Caco-2 (cell line): ENCODE measurements at regions of chr17 and their contacts with region 1.

Region 1: GRCh38 chr17:58317421-58318064 is 11.1 kb downstream of the TSPOAP1 start:
- DNase-seq: peak; percentile 77 to 83
- H3K4me3 ChIP-seq: no peak overlapping the region
- H3K4me3 Mint-ChIP-seq: no peak overlapping the region
- H3K27ac Mint-ChIP-seq: peak overlapping the region; percentile 8
- H3K4me1 ChIP-seq: peaks cover 16% of the 10 kb centered on the region
- H3K4me1 Mint-ChIP-seq: peaks cover 20% of the 10 kb centered on the region
- H3K27me3 ChIP-seq: no peaks in the 10 kb centered on the region
- H3K27me3 Mint-ChIP-seq: no peaks in the 10 kb centered on the region
- CTCF ChIP-seq: peak; percentile 86 to 91

Region 2: GRCh38 chr17:58303971-58304725 is 13.4 kb before region 1 on chr17:
- CTCF ChIA-PET with region 1: interaction called, 16 read pairs
- POLR2A ChIA-PET with region 1: no interaction called
- intact Hi-C with region 1: no loop called
- DNase-seq: peak; percentile 69 to 76
- H3K4me3 ChIP-seq: no peak overlapping the region
- H3K4me3 Mint-ChIP-seq: no peak overlapping the region
- H3K27ac Mint-ChIP-seq: no peak overlapping the region
- H3K4me1 ChIP-seq: no peaks in the 10 kb centered on the region
- H3K4me1 Mint-ChIP-seq: peaks cover 5% of the 10 kb centered on the region
- H3K27me3 ChIP-seq: no peaks in the 10 kb centered on the region
- H3K27me3 Mint-ChIP-seq: no peaks in the 10 kb centered on the region
- CTCF ChIP-seq: peak; percentile 85 to 91

Region 3: DNA sequence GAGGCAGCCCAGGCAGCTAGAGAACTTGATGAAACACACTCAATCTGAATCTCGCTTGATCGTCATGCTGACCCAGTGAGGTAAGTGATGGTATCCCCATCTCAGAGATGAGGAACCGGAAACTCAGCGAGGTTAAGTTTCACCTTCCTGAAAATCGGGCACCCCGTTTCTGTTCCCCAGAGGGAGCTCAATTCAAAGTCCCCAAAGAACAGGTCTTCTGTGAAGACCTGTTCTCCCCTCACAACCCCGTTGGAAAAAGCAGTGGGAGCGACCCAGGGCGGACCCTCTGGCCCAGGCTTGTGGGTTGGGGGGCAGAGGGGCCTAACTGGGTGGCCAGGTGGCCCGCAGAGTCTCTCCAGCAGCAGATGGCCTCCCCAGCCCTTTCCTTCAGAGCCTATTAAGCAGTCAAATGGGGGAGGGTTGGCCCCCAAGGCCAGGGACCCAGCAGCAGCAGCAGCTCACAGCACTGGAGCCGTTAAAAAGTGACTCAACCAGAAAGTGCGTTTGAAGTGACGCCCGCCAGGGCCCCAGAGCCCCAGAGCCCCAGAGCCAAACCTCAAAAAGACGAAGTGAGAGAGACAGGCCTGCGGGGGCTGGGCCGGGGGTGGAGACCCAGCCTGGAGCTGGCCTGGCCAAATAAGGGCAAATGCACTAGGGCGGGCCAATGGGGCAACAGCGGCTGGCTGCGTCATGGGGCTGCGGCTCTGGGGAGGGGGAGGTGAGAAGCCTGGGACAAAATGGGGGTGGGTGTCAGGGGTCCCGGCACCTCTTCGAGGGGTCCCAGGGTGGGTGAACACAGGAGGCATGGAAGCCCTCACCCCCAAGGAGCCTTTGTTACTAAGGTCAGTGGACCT is 20.3 kb after region 1 on chr17:
- CTCF ChIA-PET with region 1: interaction called, 17 read pairs
- POLR2A ChIA-PET with region 1: no interaction called
- intact Hi-C with region 1: no loop called
- DNase-seq: peak; percentile 73 to 78
- H3K4me3 ChIP-seq: no peak overlapping the region
- H3K4me3 Mint-ChIP-seq: no peak overlapping the region
- H3K27ac Mint-ChIP-seq: peak overlapping the region; percentile 74
- H3K4me1 ChIP-seq: peaks cover 34% of the 10 kb centered on the region
- H3K4me1 Mint-ChIP-seq: peaks cover 15% of the 10 kb centered on the region
- H3K27me3 ChIP-seq: no peaks in the 10 kb centered on the region
- H3K27me3 Mint-ChIP-seq: no peaks in the 10 kb centered on the region
- CTCF ChIP-seq: no peak

Region 4: DNA sequence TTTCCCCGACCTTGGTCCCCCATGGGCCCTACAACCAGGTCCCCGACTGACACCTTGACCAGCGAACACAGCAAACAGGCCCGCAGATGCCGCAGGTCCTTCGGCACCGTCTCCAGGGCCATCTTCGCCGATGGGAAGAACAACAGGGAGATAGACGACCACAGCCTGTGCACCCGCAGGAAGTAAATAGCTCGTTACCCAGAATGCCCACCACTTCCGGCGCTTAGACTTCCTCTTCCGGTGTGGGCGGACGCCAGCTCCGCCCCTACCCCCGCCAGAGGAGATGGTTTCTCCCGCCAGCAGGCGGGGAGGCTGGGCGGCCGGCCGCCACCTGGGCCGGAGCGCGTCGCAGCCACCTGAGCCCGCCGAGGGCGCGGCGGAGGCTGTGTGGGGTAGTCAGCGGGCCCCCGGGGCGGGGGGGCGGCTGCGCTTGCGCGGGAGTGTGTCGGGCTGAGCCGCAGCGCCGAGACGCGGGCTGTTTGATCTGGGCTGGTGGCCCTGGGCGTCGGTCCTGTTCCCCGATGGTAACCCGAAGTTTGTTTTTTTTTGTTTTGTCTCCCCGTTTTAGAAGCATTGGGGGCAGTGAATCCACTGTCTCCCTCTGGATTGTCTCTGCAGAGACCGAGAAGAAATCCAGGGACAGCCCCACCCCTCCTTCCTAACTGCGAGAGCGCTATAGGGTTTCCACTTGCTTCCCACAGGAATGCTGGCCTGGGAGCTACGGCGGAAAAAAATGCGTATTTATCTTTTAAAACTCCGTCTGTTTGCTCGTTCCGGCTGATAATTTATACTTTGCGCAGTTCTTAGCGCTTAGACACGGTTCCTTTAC is 34.7 kb after region 1 on chr17 and contains the start of gene SUPT4H1:
- CTCF ChIA-PET with region 1: interaction called, 15 read pairs
- POLR2A ChIA-PET with region 1: no interaction called
- intact Hi-C with region 1: no loop called
- DNase-seq: peak; percentile 89 to 91
- H3K4me3 ChIP-seq: peak within 1 kb of the TSS; percentile 48
- H3K4me3 Mint-ChIP-seq: peak within 1 kb of the TSS; percentile 82
- H3K27ac Mint-ChIP-seq: peak within 1 kb of the TSS; percentile 81
- H3K4me1 ChIP-seq: no peaks in the 10 kb centered on the region
- H3K4me1 Mint-ChIP-seq: peaks cover 11% of the 10 kb centered on the region
- H3K27me3 ChIP-seq: no peaks in the 10 kb centered on the region
- H3K27me3 Mint-ChIP-seq: no peaks in the 10 kb centered on the region
- CTCF ChIP-seq: no peak
- total RNA-seq, gene SUPT4H1: 70.9 and 71.4 TPM in 2 replicates

Region 5: GRCh38 chr17:58364270-58364942 is 46.9 kb after region 1 on chr17:
- CTCF ChIA-PET with region 1: interaction called, 13 read pairs
- POLR2A ChIA-PET with region 1: interaction called, 6 read pairs
- intact Hi-C with region 1: loop called (anchors 5 kb)
- DNase-seq: peak; percentile 84 to 92
- H3K4me3 ChIP-seq: no peak overlapping the region
- H3K4me3 Mint-ChIP-seq: peak overlapping the region; percentile 43
- H3K27ac Mint-ChIP-seq: peak overlapping the region; percentile 67
- H3K4me1 ChIP-seq: peaks cover 61% of the 10 kb centered on the region
- H3K4me1 Mint-ChIP-seq: peaks cover 63% of the 10 kb centered on the region
- H3K27me3 ChIP-seq: no peaks in the 10 kb centered on the region
- H3K27me3 Mint-ChIP-seq: no peaks in the 10 kb centered on the region
- CTCF ChIP-seq: no peak

Region 6: DNA sequence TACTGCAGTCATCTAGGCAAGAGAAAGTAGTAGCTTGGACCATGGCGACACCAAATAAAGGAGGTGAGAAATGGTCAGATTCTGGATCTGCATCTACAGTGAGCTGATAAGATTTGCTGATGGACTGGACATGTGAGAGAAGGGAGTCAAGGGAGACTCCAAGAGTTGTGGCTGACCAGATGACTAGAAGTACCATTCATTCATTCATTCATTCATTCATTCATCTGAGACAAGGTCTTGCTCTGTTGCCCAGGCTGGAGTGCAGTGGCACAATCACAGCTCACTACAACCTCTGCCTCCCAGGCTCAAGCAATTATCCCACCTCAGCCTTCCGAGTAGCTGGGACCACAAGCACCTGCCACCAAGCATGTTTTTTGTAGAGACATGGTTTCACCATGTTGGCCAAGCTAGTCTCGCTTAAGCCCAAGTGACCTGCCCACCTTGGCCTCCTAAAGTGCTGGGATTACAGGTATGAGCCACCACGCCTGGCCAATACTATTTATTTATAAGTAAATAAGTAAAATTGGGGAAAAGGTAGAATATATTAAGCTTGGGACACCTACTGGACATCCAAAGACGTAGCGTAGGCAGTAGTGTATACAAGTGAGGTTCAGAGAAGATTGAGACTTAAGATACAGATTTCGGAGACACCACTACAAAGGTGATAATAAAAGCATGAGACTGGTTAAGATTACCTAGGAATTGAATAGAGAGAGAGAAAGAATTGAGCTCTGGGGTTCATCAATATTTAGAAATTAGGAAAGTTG is 115.4 kb after region 1 on chr17:
- CTCF ChIA-PET with region 1: interaction called, 13 read pairs
- POLR2A ChIA-PET with region 1: no interaction called
- intact Hi-C with region 1: no loop called
- DNase-seq: no peak
- H3K4me3 ChIP-seq: no peak overlapping the region
- H3K4me3 Mint-ChIP-seq: no peak overlapping the region
- H3K27ac Mint-ChIP-seq: no peak overlapping the region
- H3K4me1 ChIP-seq: no peaks in the 10 kb centered on the region
- H3K4me1 Mint-ChIP-seq: no peaks in the 10 kb centered on the region
- H3K27me3 ChIP-seq: no peaks in the 10 kb centered on the region
- H3K27me3 Mint-ChIP-seq: no peaks in the 10 kb centered on the region
- CTCF ChIP-seq: peak in 1 of 2 experiments; percentile 24

Region 7: DNA sequence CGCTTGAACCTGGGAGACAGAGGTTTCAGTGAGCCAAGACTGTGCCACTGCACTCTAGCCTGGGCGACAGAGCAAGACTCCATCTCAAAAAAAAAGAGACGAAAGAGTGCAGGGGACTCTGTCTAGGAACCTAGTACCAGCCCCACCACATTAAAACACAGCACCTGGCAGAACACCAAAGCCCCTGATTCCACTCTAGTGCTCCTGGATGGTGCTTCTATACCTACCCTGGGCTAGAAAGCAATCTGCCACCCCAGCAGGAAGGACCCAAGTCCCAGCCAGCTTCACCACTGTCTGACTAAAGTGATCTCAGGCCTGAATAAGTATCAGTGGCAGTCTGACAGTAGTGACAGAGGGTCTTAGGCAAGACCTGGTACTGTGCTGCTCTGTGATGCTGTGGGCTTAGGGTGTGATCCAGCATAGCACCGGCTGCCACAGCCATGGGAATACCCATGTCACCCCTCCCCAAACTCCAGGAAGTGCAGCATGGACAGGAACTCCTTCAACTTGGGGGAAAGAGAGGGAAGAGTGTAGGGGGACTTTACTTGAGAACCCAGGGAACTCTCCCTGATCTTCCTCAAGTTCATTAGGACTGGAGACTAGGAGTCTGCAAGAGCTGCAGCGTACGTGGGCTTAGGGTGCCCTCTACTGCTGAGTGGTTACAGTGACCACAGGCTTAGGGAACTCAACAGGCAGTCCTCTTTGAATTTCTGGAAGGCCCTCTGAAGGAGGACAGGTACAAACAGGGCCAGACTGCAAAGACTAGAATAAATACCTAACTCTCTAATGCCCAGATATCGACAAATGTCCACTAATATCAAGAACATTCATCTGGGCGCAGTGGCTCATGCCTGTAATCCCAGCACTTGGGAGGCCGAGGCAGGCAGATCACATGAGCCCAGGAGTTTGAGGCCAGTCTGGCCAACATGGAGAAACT is 129.8 kb after region 1 on chr17:
- CTCF ChIA-PET with region 1: interaction called, 15 read pairs
- POLR2A ChIA-PET with region 1: no interaction called
- intact Hi-C with region 1: loop called (anchors 1 kb)
- DNase-seq: peak; percentile 88 to 89
- H3K4me3 ChIP-seq: no peak overlapping the region
- H3K4me3 Mint-ChIP-seq: no peak overlapping the region
- H3K27ac Mint-ChIP-seq: peak overlapping the region; percentile 69
- H3K4me1 ChIP-seq: no peaks in the 10 kb centered on the region
- H3K4me1 Mint-ChIP-seq: peaks cover 8% of the 10 kb centered on the region
- H3K27me3 ChIP-seq: no peaks in the 10 kb centered on the region
- H3K27me3 Mint-ChIP-seq: no peaks in the 10 kb centered on the region
- CTCF ChIP-seq: peak; percentile 81 to 92